WTC11 (cell line): ENCODE measurements at regions of chr17 and their contacts with region 1.

Region 1: DNA sequence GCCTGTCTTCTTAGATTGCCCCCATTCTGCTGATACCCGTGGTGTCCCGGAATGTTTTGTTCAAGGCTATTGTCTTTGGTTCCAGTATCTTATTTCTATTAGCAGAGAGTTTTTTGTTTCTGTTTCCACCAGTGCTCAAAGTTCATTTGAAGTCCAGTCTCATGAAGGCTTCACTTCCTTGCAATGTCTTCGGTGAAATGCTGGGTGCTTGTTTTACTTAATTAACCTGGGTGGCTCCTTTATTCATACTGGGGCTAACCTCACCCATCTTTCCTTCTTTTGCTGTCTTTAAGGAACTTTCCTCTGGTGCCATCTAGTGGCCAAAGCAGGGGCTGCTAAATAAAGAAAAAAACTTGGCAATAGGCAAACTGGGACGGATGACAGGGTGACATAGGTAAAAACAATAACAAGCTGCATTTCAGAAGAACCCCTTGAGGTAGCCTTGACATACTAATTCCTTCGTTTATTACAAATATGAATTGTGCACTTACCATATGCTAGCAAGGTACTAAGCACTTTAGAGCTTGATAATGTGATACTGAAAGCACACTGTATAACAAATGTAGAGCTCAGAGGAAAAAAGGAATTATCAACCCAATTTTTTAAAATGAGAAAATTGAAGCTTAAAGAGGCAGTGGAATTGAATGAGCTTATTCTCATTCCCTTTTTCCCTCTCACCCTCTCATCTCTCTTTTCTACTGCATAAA is 2.8 kb upstream of the SMIM36 start:
- DNase-seq: peak; percentile 69
- ATAC-seq: peak; percentile 69
- H3K4me3 Mint-ChIP-seq: no peak overlapping the region
- H3K27ac Mint-ChIP-seq: no peak overlapping the region
- H3K4me1 Mint-ChIP-seq: peaks cover 16% of the 10 kb centered on the region
- H3K27me3 Mint-ChIP-seq: no peaks in the 10 kb centered on the region
- CTCF ChIP-seq: peak; percentile 60

Region 2: DNA sequence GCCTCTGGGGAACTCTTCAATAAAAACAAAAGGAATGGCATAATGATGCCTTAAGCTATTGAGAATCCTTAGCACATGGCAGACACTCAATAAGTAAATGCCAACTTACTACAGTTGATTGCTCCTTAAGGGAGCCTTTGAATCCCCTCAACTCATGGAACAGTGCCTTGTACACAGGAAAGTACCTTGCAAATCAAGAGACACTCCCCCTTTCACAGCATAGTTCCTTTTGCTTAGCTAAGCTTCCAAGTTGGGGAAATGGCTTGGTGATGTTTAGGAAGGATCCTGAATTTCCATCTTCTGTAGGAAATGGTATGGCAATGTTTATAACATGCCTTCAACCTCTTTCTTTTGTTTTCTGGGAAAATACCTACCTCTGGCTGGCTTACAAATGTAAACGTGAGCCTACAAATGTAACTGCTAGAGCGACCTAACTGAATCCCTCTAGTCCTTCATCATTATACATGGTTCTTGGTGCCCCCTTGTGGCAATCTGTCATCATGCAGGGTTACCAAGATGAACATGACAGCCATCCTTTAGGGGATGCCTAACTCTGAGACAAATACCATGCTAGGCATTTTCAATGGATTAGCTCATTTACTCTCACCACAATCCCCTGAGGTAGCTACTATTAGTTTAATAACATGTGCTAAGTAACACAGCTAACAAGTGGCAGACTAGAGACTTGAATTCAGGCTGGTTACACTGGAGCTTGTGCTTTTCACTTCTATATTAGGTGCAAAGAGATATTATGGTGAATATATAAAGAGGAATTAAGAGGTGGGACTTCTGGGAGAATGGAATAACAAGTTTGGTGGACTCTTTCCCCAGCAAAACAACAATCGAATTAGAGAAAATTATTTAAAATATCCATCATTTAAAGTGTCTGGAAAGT is 157.4 kb before region 1 on chr17:
- CTCF ChIA-PET with region 1: interaction called, 22 read pairs
- POLR2A ChIA-PET with region 1: no interaction called
- DNase-seq: peak; percentile 88
- ATAC-seq: peak; percentile 100
- H3K4me3 Mint-ChIP-seq: no peak overlapping the region
- H3K27ac Mint-ChIP-seq: no peak overlapping the region
- H3K4me1 Mint-ChIP-seq: peaks cover 9% of the 10 kb centered on the region
- H3K27me3 Mint-ChIP-seq: no peaks in the 10 kb centered on the region
- CTCF ChIP-seq: peak; percentile 78

Region 3: DNA sequence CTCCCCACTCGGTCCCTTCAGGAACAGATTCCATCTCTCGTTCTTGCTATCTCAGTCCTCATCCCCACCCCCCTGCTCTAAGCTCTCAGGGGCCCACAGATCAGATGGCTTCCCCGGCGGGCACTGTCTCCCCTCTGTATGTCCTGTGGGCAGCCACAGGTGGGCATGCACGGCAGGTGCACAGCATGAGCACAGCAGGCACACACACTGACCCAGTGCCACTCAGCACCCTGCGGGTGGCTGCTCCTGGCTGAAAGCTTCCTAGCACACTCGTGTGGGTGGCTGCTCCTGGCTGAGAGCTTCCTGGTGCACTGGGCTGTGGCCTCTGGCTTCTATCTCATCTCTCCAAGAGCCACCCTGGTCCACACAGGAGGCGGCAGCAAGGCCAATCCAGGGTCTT is 41.7 kb after region 1 on chr17:
- CTCF ChIA-PET with region 1: no interaction called
- POLR2A ChIA-PET with region 1: no interaction called
- DNase-seq: no peak
- ATAC-seq: no peak
- H3K4me3 Mint-ChIP-seq: no peak overlapping the region
- H3K27ac Mint-ChIP-seq: no peak overlapping the region
- H3K4me1 Mint-ChIP-seq: peaks cover 23% of the 10 kb centered on the region
- H3K27me3 Mint-ChIP-seq: no peaks in the 10 kb centered on the region
- CTCF ChIP-seq: no peak